Activated CD4-positive, alpha-beta T cell treated with anti-CD3 and anti-CD28 coated beads for 36 hours (primary cell): ENCODE measurements at regions of chr3 and their contacts with region 1.

Region 1: DNA sequence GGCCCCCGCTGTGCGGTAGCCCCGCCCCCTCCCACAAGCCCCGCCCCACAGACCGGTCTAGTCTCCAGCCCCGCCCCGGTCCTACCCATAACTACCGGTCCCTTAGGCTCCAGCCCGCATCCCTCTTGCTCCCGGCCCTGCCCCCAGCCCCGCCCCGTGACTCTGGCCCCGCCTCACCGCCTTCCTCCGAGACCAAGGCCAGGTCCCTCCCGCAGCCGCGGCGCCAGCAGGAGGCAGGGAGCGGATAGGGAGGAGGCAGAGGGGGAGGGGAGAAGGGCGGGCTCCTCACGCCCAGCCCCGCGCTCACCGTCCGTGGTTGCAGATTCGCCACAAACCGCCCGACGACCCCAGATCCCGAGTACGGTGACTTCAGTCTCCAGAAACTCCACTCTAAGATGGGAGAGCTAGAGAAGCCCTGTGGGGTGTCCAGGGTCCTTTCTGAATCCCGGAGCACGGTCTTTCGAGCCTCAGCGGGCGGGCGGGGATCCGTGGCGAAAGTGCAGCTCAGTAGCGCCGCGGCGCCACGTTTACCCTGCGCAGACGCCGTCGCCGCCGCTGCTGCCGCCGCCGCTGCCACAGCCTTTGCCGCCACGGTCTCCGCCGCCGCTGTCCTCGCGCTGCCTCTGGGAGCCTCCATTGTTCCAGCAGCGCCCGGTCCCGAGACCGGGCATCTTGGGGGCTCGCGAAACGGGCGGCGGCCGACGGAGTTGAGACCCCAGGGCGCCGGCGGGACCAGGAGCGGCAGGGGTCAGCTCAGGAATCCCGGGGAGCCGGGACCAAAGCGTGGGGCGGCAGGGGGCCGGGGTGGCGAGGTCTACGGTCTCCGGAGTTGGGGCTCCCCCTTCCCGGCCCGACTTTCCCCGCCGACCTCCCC is at the start of gene BRPF1:
- DNase-seq: peak; percentile 100
- ATAC-seq: peak; percentile 96
- H3K4me3 Mint-ChIP-seq: peak within 1 kb of the TSS; percentile 79
- H3K27ac Mint-ChIP-seq: peak within 1 kb of the TSS; percentile 96
- H3K4me1 Mint-ChIP-seq: peaks cover 67% of the 10 kb centered on the region
- H3K27me3 Mint-ChIP-seq: no peaks in the 10 kb centered on the region
- total RNA-seq, gene BRPF1: 23.3 to 25.9 TPM

Region 2: GRCh38 chr3:8963137-8963869 is 768.1 kb before region 1 on chr3 and contains the start of gene RAD18:
- CTCF ChIA-PET with region 1: no interaction called
- POLR2A ChIA-PET with region 1: no interaction called
- intact Hi-C with region 1: loop called in 1 of 2 experiments (anchors 5 kb)
- DNase-seq: peak; percentile 95
- ATAC-seq: peak; percentile 94
- H3K4me3 Mint-ChIP-seq: peak within 1 kb of the TSS; percentile 95
- H3K27ac Mint-ChIP-seq: peak within 1 kb of the TSS; percentile 93
- H3K4me1 Mint-ChIP-seq: peaks cover 32% of the 10 kb centered on the region
- H3K27me3 Mint-ChIP-seq: no peaks in the 10 kb centered on the region
- total RNA-seq, gene RAD18: 47.8 to 50.5 TPM

Region 3: GRCh38 chr3:9396700-9397521 is 334.5 kb before region 1 on chr3:
- CTCF ChIA-PET with region 1: interaction called, 3 read pairs
- POLR2A ChIA-PET with region 1: interaction called, 3 read pairs
- intact Hi-C with region 1: loop called (anchors 1 kb)
- DNase-seq: peak; percentile 99
- ATAC-seq: peak; percentile 74
- H3K4me3 Mint-ChIP-seq: peak overlapping the region; percentile 93
- H3K27ac Mint-ChIP-seq: peak overlapping the region; percentile 98
- H3K4me1 Mint-ChIP-seq: peaks cover 63% of the 10 kb centered on the region
- H3K27me3 Mint-ChIP-seq: no peaks in the 10 kb centered on the region

Region 4: DNA sequence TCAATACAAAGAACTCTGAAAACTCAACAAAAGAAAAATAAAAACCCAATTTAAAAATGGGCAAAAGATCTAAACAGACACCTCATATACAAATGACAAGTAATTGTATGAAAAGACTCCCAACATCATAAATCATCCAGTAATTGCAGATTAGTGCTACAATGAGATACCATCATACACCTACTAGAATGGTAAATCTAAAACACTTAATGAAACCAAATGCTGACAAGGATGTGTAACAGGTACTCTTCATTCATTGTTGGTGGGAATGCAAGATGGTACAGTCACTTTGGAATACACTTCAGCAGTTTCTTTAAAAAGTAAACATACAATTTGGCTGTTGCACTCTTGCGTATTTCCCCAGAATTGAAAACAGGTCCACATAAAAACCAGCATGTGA is 246.2 kb before region 1 on chr3:
- CTCF ChIA-PET with region 1: no interaction called
- POLR2A ChIA-PET with region 1: no interaction called
- intact Hi-C with region 1: no loop called
- DNase-seq: no peak
- ATAC-seq: no peak
- H3K4me3 Mint-ChIP-seq: no peak overlapping the region
- H3K27ac Mint-ChIP-seq: no peak overlapping the region
- H3K4me1 Mint-ChIP-seq: no peaks in the 10 kb centered on the region
- H3K27me3 Mint-ChIP-seq: no peaks in the 10 kb centered on the region

Region 5: DNA sequence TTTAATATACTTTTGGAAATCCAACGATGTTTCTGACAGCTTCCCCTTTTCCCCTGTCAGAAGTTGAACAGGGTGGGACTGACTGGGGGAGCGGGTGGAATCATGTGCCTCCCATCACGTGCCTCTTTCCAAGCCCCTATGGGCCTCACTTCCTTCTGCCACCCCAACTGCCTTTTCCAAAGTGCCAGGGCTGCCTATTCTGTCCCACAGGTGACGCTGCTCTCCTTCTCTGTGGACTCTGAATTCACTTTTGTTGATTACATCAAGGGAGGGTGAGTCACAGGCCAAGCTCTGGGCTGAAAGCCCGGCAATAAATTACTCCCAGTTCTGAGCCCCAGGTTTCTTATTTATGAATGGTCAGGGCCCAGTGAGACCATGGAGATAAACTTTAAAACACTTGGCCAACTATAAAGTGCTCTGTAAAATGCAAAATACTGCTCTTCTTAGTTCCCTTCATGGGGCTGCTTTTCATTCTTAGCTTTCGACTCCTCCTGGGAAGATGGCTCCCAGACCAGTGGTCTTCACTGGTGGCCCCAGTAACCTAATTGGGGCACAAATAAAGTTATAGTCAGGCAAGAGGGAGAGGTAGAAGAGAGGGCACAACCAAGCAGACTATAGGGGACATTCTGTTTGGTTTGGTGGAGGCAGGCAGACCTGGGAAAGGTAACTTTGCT is 15.5 kb before region 1 on chr3:
- CTCF ChIA-PET with region 1: interaction called, 15 read pairs
- POLR2A ChIA-PET with region 1: no interaction called
- intact Hi-C with region 1: no loop called
- DNase-seq: peak; percentile 62
- ATAC-seq: peak; percentile 92
- H3K4me3 Mint-ChIP-seq: no peak overlapping the region
- H3K27ac Mint-ChIP-seq: no peak overlapping the region
- H3K4me1 Mint-ChIP-seq: peaks cover 9% of the 10 kb centered on the region
- H3K27me3 Mint-ChIP-seq: peaks cover 2% of the 10 kb centered on the region

Region 6: DNA sequence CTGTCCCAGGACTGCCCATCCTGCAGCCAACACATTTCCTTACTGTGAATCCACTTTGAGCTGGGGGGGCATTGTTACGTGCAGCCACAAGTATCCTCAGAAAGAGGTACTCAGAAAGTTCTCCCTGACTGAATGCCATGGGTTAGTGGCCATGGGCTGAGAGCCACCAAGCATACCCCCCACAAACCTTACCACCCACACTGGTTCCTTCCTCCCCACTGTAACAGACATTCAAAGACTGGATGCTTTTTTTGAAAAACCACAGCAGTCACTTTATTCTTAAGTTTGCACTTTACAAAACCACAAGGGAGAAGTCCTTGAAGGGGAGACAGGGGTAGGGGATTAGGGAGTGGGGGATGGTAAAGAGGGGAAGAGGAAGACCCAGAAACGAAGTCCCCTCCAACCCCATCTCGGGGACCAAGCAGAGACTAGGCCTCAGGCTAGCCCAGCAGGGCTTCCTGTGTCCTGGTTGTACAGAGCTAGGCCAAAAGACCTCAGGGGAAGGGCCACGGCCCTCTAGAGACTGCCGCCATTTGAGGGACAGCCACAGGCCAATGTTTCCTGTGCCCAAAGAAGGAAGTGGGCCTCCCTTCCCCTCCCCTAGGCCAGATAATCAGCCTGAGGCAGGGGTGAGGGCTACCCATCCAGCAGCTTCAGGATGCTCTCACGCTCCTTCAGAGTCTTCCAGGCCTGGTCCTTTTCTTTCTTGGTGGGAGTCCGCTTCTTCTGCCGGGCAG is 48.4 kb after region 1 on chr3:
- CTCF ChIA-PET with region 1: interaction called, 3 read pairs
- POLR2A ChIA-PET with region 1: no interaction called
- intact Hi-C with region 1: loop called (anchors 1 to 5 kb)
- DNase-seq: peak; percentile 56
- ATAC-seq: peak; percentile 22
- H3K4me3 Mint-ChIP-seq: no peak overlapping the region
- H3K27ac Mint-ChIP-seq: peak overlapping the region; percentile 95
- H3K4me1 Mint-ChIP-seq: peaks cover 61% of the 10 kb centered on the region
- H3K27me3 Mint-ChIP-seq: no peaks in the 10 kb centered on the region

Region 7: DNA sequence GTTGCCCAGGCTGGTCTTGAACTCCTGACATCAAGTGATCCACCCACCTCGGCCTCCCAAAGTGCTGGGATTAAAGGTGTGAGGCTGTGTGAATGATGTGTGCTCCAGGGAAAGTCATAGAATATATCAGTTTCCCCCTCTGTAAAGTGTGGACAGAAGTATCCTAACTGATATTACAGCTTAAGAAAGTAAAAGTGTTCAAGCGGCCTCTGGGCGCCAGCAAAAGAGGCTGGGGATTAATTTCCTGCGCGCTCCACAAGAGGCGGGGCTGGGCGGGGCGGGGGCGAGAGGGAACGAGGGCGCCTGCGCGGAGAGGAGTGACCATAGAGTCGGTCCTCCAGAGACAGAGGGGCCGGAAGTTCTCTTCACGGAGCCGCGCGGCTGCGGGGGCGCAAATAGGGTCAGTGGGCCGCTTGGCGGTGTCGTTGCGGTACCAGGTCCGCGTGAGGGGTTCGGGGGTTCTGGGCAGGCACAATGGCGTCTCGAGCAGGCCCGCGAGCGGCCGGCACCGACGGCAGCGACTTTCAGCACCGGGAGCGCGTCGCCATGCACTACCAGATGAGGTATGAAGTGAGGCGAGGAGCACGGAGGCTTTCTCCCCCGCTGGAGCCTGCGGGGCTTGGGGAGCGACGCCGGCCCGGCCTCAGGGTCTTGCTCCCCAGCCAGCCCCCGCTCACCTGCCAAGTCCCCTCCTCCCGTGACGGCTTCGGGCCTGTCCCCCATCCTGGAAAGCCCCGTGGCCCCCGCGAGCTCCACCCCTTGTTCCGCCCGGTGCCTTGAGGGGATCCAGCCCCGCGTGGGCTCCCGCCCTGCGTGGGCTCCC is 159.0 kb after region 1 on chr3 and contains the start of gene JAGN1:
- CTCF ChIA-PET with region 1: interaction called, 3 read pairs
- POLR2A ChIA-PET with region 1: no interaction called
- intact Hi-C with region 1: loop called in 1 of 2 experiments (anchors 1 kb)
- DNase-seq: peak; percentile 96
- ATAC-seq: peak; percentile 82
- H3K4me3 Mint-ChIP-seq: peak within 1 kb of the TSS; percentile 96
- H3K27ac Mint-ChIP-seq: peak within 1 kb of the TSS; percentile 98
- H3K4me1 Mint-ChIP-seq: peaks cover 34% of the 10 kb centered on the region
- H3K27me3 Mint-ChIP-seq: no peaks in the 10 kb centered on the region
- total RNA-seq, gene JAGN1: 27.1 to 33.0 TPM

Region 8: DNA sequence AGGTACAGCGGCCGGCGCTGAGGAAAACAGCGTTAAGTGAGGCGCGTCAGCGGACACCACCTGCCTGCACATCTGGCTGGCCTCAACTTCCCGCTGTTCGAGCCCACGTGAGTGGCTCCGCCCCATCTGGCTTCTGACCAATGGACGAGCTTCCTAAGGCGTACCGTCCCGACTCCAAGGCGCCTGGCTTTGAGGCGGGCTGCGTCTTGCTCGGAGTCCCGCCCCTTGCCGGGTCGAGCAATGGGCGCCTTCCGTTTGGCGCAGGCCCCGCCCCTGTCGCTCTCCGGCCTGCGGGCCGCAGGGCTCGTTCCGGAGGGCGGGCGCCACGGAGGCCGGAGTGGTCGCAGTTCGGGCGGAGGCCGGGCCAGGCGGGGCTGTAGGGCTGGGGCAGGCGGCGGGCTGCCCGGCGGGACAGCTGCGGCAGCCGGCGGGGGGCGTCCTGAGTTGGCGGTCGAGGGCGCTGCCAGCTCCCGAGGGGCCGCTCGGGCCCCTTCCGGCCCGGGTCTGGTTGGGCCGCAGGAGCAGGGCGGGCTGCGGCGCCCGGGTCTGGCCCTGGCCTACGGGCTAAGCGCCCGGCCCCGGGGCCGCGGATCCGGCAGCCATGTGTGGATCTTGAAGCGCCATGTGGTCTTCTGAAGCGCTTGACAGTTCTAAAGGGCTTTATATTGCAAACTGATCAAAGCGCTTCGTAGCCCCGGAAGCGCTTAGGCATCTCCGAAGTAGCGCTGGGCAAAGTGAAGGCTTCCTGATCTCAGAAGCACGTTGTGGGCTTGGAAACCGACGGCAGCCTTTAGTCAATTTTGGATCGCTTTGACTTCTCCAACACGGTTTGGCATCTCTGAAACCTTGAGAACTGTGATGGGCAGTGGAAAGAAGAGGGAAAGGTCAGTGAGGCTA is 517.0 kb after region 1 on chr3 and contains the start of gene TATDN2:
- CTCF ChIA-PET with region 1: no interaction called
- POLR2A ChIA-PET with region 1: no interaction called
- intact Hi-C with region 1: loop called in 1 of 2 experiments (anchors 1 kb)
- DNase-seq: peak; percentile 97
- ATAC-seq: peak; percentile 94
- H3K4me3 Mint-ChIP-seq: peak within 1 kb of the TSS; percentile 97
- H3K27ac Mint-ChIP-seq: peak within 1 kb of the TSS; percentile 96
- H3K4me1 Mint-ChIP-seq: peaks cover 63% of the 10 kb centered on the region
- H3K27me3 Mint-ChIP-seq: no peaks in the 10 kb centered on the region
- total RNA-seq, gene TATDN2: 40.0 to 40.2 TPM

Region 9: GRCh38 chr3:10389995-10390394 is 658.6 kb after region 1 on chr3:
- CTCF ChIA-PET with region 1: no interaction called
- POLR2A ChIA-PET with region 1: no interaction called
- intact Hi-C with region 1: no loop called
- DNase-seq: no peak
- ATAC-seq: no peak
- H3K4me3 Mint-ChIP-seq: no peak overlapping the region
- H3K27ac Mint-ChIP-seq: no peak overlapping the region
- H3K4me1 Mint-ChIP-seq: peaks cover 31% of the 10 kb centered on the region
- H3K27me3 Mint-ChIP-seq: no peaks in the 10 kb centered on the region